ENCODE measurements at regions of chr4 and their contacts with region 1.

Region 1: GRCh38 chr4:32417113-32417704 is 1697.0 kb downstream of the PCDH7 start:
- DNase-seq: no peak
- ATAC-seq: no peak
- H3K4me3 ChIP-seq: no peak overlapping the region
- H3K4me3 Mint-ChIP-seq: no peak overlapping the region
- H3K27ac ChIP-seq: no peak overlapping the region
- H3K27ac Mint-ChIP-seq: no peak overlapping the region
- H3K4me1 ChIP-seq: no peaks in the 10 kb centered on the region
- H3K4me1 Mint-ChIP-seq: no peaks in the 10 kb centered on the region
- H3K27me3 ChIP-seq: no peaks in the 10 kb centered on the region
- H3K27me3 Mint-ChIP-seq: no peaks in the 10 kb centered on the region
- CTCF ChIP-seq: no peak

Region 2: DNA sequence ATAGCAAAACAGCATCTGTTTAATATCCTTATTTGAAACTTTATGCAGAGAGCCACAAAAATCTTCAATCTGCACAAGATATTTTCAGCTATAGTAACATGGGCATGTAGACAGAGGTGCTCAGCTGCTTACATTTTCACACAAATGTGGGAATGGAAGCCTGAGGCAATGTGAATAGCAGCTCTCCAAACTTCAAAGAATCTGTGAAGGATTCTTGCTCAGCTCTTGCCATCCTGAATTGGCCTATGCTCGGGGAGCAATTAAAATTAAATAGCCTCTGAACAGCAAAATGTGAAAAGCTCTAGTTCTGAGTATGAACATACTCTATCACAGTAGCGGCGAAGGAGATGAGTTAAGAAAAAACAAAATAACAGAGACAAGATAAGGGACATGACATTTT is 173.3 kb before region 1 on chr4:
- CTCF ChIA-PET with region 1: no interaction called
- POLR2A ChIA-PET with region 1: no interaction called
- intact Hi-C with region 1: loop called (anchors 5 kb)
- DNase-seq: no peak
- ATAC-seq: no peak
- H3K4me3 ChIP-seq: no peak overlapping the region
- H3K4me3 Mint-ChIP-seq: no peak overlapping the region
- H3K27ac ChIP-seq: no peak overlapping the region
- H3K27ac Mint-ChIP-seq: no peak overlapping the region
- H3K4me1 ChIP-seq: no peaks in the 10 kb centered on the region
- H3K4me1 Mint-ChIP-seq: no peaks in the 10 kb centered on the region
- H3K27me3 ChIP-seq: no peaks in the 10 kb centered on the region
- H3K27me3 Mint-ChIP-seq: no peaks in the 10 kb centered on the region
- CTCF ChIP-seq: no peak

Region 3: GRCh38 chr4:32429151-32429550 is 11.9 kb after region 1 on chr4:
- CTCF ChIA-PET with region 1: no interaction called
- POLR2A ChIA-PET with region 1: no interaction called
- intact Hi-C with region 1: no loop called
- DNase-seq: no peak
- ATAC-seq: no peak
- H3K4me3 ChIP-seq: no peak overlapping the region
- H3K4me3 Mint-ChIP-seq: no peak overlapping the region
- H3K27ac ChIP-seq: no peak overlapping the region
- H3K27ac Mint-ChIP-seq: no peak overlapping the region
- H3K4me1 ChIP-seq: no peaks in the 10 kb centered on the region
- H3K4me1 Mint-ChIP-seq: no peaks in the 10 kb centered on the region
- H3K27me3 ChIP-seq: no peaks in the 10 kb centered on the region
- H3K27me3 Mint-ChIP-seq: no peaks in the 10 kb centered on the region
- CTCF ChIP-seq: no peak

Region 4: GRCh38 chr4:32455206-32455605 is 38.0 kb after region 1 on chr4:
- CTCF ChIA-PET with region 1: no interaction called
- POLR2A ChIA-PET with region 1: no interaction called
- intact Hi-C with region 1: no loop called
- DNase-seq: no peak
- ATAC-seq: no peak
- H3K4me3 ChIP-seq: no peak overlapping the region
- H3K4me3 Mint-ChIP-seq: no peak overlapping the region
- H3K27ac ChIP-seq: no peak overlapping the region
- H3K27ac Mint-ChIP-seq: no peak overlapping the region
- H3K4me1 ChIP-seq: no peaks in the 10 kb centered on the region
- H3K4me1 Mint-ChIP-seq: no peaks in the 10 kb centered on the region
- H3K27me3 ChIP-seq: no peaks in the 10 kb centered on the region
- H3K27me3 Mint-ChIP-seq: no peaks in the 10 kb centered on the region
- CTCF ChIP-seq: no peak

Region 5: GRCh38 chr4:32560306-32560705 is 143.1 kb after region 1 on chr4:
- CTCF ChIA-PET with region 1: no interaction called
- POLR2A ChIA-PET with region 1: no interaction called
- intact Hi-C with region 1: no loop called
- DNase-seq: no peak
- ATAC-seq: no peak
- H3K4me3 ChIP-seq: no peak overlapping the region
- H3K4me3 Mint-ChIP-seq: no peak overlapping the region
- H3K27ac ChIP-seq: no peak overlapping the region
- H3K27ac Mint-ChIP-seq: no peak overlapping the region
- H3K4me1 ChIP-seq: no peaks in the 10 kb centered on the region
- H3K4me1 Mint-ChIP-seq: no peaks in the 10 kb centered on the region
- H3K27me3 ChIP-seq: no peaks in the 10 kb centered on the region
- H3K27me3 Mint-ChIP-seq: no peaks in the 10 kb centered on the region
- CTCF ChIP-seq: no peak

Measured in B cell (primary cell).